Aorta (tissue), 5 donors: ENCODE measurements at regions of chr10 and their contacts with region 1.

Region 1: GRCh38 chr10:87594864-87595263 is 64.8 kb upstream of the PAPSS2 start:
- DNase-seq: no peak
- ATAC-seq: peak; percentile 36
- H3K4me3 ChIP-seq: no peak overlapping the region
- H3K27ac ChIP-seq: no peak overlapping the region
- H3K4me1 ChIP-seq: no peaks in the 10 kb centered on the region
- H3K27me3 ChIP-seq: no peaks in the 10 kb centered on the region

Region 2: DNA sequence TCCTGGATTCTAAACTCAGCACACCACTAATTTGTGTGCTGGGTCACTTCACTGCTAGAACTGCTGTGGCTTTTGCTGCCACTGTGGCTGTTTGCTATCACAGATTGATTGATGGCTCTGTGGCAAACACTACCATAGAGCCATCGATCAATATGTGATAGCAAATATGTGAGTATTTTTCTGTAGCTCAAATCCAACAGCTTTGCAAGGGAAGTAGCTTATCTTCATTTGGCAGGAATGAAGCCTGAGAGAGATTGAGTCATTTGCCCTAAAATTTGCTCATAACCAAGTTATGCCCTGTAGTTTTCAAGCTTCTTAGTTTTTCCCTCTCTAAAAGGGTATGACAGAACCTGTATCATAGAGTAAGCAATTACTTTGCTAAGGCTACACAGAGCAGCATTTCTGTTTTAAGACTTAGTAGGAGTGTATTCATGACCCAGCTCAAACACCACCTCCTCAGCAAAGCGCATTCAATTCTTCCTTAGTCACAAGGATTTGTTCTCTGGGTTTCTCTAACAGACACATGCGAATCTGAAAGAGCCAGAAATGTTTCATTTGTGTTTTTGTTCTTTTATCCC is 47.0 kb before region 1 on chr10:
- intact Hi-C with region 1: loop called in 1 of 2 experiments (anchors 5 kb)
- DNase-seq: no peak
- ATAC-seq: peak; percentile 50
- H3K4me3 ChIP-seq: no peak overlapping the region
- H3K27ac ChIP-seq: peak overlapping the region in 1 of 2 donors; percentile 57
- H3K4me1 ChIP-seq: peaks cover 3 to 7% of the 10 kb centered on the region in 2 donors
- H3K27me3 ChIP-seq: no peaks in the 10 kb centered on the region

Region 3: DNA sequence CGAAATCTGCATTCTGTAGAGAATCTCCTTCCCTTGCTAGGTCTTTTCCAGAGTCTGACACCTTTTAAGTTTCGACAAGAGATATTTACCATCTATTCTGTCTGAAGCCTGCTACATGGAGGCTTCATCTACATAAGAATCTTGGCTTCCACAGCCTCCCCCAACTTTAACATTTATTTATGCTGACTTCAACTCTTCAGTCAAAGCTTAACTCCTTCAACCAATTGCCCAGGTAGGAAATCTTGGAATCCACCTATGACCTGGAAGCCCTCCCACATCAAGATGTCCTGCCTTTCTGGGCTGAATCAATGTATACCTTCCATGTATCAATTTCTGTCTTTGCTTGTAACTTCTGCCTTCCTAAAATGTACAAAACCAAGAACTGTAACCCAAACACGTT is 35.5 kb before region 1 on chr10:
- intact Hi-C with region 1: no loop called
- DNase-seq: no peak
- ATAC-seq: no peak
- H3K4me3 ChIP-seq: no peak overlapping the region
- H3K27ac ChIP-seq: no peak overlapping the region
- H3K4me1 ChIP-seq: no peaks in the 10 kb centered on the region
- H3K27me3 ChIP-seq: no peaks in the 10 kb centered on the region

Region 4: GRCh38 chr10:87578842-87579401 is 15.9 kb before region 1 on chr10:
- intact Hi-C with region 1: no loop called
- DNase-seq: no peak
- ATAC-seq: peak; percentile 73
- H3K4me3 ChIP-seq: no peak overlapping the region
- H3K27ac ChIP-seq: no peak overlapping the region
- H3K4me1 ChIP-seq: no peaks in the 10 kb centered on the region
- H3K27me3 ChIP-seq: no peaks in the 10 kb centered on the region

Region 5: DNA sequence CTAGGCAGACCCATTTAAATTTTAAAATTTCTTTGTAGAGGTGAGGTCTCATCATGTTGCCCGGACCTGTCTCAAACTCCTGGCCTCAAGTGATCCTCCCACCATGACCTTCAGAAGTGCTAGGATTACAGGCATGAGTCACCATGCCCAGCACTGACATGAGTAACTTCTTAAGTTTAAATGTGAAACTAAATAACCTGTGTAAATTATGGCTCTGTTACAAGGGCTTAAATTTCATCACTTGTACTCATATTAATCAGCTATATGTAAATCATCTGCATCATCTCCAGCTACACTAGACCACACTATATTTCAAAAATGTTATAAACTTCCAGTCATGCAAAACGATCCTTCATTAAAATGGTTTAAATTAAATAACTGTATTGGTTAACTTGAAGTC is 167.0 kb after region 1 on chr10:
- intact Hi-C with region 1: no loop called
- DNase-seq: no peak
- ATAC-seq: no peak
- H3K4me3 ChIP-seq: no peak overlapping the region
- H3K27ac ChIP-seq: no peak overlapping the region
- H3K4me1 ChIP-seq: no peaks in the 10 kb centered on the region
- H3K27me3 ChIP-seq: no peaks in the 10 kb centered on the region

Region 6: GRCh38 chr10:87842776-87843497 is 248.1 kb after region 1 on chr10:
- intact Hi-C with region 1: no loop called
- DNase-seq: no peak
- ATAC-seq: no peak
- H3K4me3 ChIP-seq: no peak overlapping the region
- H3K27ac ChIP-seq: no peak overlapping the region
- H3K4me1 ChIP-seq: no peaks in the 10 kb centered on the region
- H3K27me3 ChIP-seq: no peaks in the 10 kb centered on the region